IMR-90 (cell line): ENCODE measurements at regions of chr9 and their contacts with region 1.

Region 1: GRCh38 chr9:19336166-19336565 is 43.9 kb downstream of the RPS6 start:
- DNase-seq: no peak
- ATAC-seq: no peak
- H3K4me3 ChIP-seq: no peak overlapping the region
- H3K27ac ChIP-seq: no peak overlapping the region
- H3K4me1 ChIP-seq: no peaks in the 10 kb centered on the region
- H3K27me3 ChIP-seq: no peaks in the 10 kb centered on the region
- CTCF ChIP-seq: no peak
- POLR2A ChIP-seq: no peak
- RAD21 ChIP-seq: no peak

Region 2: GRCh38 chr9:19371942-19372341 is 35.8 kb after region 1 on chr9:
- CTCF ChIA-PET with region 1: no interaction called
- POLR2A ChIA-PET with region 1: no interaction called
- dilution Hi-C with region 1: no loop called
- in situ Hi-C with region 1: no loop called
- intact Hi-C with region 1: loop called (anchors 5 kb)
- DNase-seq: no peak
- ATAC-seq: no peak
- H3K4me3 ChIP-seq: no peak overlapping the region
- H3K27ac ChIP-seq: no peak overlapping the region
- H3K4me1 ChIP-seq: no peaks in the 10 kb centered on the region
- H3K27me3 ChIP-seq: no peaks in the 10 kb centered on the region
- CTCF ChIP-seq: no peak
- POLR2A ChIP-seq: no peak
- RAD21 ChIP-seq: no peak

Region 3: DNA sequence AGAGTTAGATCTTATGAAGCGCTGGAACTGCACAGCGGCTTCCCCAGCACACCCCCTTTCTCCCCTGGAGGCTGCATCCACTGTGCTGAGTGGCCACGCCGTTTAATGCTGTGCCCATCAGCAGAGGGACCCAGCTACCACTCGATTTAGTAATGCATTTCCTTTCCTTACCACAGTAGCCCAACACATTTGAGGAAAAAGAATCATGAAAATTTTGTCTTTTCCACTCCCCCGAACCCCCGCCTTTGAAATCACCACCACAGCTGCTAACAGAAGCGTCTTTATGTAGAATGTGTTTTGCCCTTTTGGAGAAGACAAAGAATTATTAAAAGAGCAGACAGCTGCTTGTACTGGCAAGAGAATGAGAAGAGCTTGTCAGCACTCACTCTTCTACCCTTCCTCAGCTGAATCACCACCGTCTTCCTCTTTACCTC is 145.8 kb after region 1 on chr9:
- CTCF ChIA-PET with region 1: no interaction called
- POLR2A ChIA-PET with region 1: no interaction called
- dilution Hi-C with region 1: no loop called
- in situ Hi-C with region 1: no loop called
- intact Hi-C with region 1: no loop called
- DNase-seq: no peak
- ATAC-seq: no peak
- H3K4me3 ChIP-seq: no peak overlapping the region
- H3K27ac ChIP-seq: no peak overlapping the region
- H3K4me1 ChIP-seq: no peaks in the 10 kb centered on the region
- H3K27me3 ChIP-seq: peaks cover 25% of the 10 kb centered on the region
- CTCF ChIP-seq: no peak
- POLR2A ChIP-seq: no peak
- RAD21 ChIP-seq: no peak